ENCODE measurements at regions of chr10 and their contacts with region 1.

Region 1: DNA sequence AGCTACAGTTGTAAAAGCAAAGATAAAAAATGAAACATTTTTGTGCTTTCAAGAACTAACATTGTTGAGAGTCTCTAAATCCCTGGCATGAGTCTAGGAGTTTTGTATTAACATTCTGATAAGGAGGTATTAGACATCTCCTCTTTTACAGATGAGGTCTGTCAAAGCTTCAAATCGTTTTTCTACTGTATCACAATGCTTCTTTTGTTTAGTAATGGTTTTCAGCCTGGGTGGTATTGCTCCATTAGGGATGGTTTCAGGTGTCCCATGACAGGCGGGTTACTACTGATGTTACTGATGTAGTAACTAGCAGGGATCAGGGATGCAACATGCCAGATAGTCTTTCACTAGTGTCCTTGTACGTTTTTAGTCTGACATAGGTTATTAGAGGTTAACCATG is 27.4 kb downstream of the STAM start:
- DNase-seq: no peak
- ATAC-seq: no peak
- H3K4me3 ChIP-seq: no peak overlapping the region
- H3K27ac ChIP-seq: no peak overlapping the region
- H3K4me1 ChIP-seq: peaks cover 12% of the 10 kb centered on the region
- H3K27me3 ChIP-seq: no peaks in the 10 kb centered on the region
- CTCF ChIP-seq: no peak
- EP300 ChIP-seq: no peak
- POLR2A ChIP-seq: no peak
- RAD21 ChIP-seq: no peak

Region 2: DNA sequence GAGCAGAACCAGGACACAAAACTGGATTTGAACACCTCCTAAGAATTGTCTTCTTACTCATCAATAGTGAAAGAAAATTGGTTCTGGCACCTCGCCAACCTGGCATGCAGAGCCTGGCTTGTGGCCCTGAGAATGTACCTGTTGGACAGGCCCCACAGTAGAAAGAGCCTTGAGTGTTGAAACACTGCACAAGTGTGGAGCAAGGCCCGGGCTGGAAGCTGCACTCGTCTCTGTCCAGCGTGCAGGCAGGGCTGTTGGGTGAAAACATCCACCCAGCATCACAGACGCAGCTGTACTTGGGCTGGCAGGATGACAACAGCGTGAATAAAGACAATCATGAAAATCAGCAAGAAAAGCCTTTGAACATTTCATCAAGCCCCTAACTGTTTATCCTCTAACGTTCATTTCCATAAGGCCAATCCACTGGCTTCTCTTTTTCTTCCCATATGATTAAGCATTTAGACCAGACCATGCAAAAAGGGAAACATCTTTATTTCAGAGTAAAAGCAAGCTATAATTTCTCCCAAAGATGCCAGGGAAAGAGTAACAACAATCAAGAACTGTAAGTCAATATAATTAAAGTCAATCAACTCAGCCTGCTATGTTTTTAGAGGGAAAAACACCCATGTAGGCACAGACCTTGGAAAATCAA is 557.3 kb before region 1 on chr10:
- CTCF ChIA-PET with region 1: no interaction called
- POLR2A ChIA-PET with region 1: no interaction called
- RAD21 ChIA-PET with region 1: no interaction called
- SMC1A ChIA-PET with region 1: no interaction called
- in situ Hi-C with region 1: no loop called
- intact Hi-C with region 1: no loop called
- DNase-seq: no peak
- ATAC-seq: no peak
- H3K4me3 ChIP-seq: no peak overlapping the region
- H3K27ac ChIP-seq: no peak overlapping the region
- H3K4me1 ChIP-seq: no peaks in the 10 kb centered on the region
- H3K27me3 ChIP-seq: no peaks in the 10 kb centered on the region; a peak in 1 of 4 replicates
- CTCF ChIP-seq: no peak
- EP300 ChIP-seq: no peak
- POLR2A ChIP-seq: no peak
- RAD21 ChIP-seq: no peak

Region 3: DNA sequence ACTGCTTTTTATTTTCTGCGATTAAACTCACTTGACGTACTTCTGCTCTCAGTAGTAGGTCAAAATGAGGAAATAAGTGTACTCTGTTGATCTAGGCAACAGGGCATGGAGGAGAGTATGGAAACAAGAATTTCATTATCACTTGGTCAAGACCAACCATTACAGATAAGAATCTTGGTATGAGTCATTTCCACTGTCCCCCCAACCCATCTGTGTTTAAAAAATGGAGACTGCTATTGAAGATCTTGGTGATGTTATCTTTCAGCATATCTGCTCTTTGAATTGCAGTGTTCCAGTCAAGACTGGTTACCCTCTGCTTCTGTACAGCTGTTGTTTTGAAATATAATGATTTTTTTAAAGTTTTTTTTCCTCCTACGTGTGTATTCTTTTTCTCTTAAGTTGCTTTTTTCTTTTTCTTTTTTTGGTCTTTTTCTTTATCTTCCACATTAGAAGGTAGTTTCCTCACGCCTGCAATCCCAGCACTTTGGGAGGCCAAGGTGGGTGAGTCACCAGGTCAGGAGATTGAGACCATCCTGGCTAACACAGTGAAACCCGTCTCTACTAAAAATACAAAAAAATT is 15.7 kb before region 1 on chr10:
- CTCF ChIA-PET with region 1: interaction called, 4 read pairs
- POLR2A ChIA-PET with region 1: interaction called, 4 read pairs
- RAD21 ChIA-PET with region 1: no interaction called
- SMC1A ChIA-PET with region 1: interaction called, 13 read pairs
- in situ Hi-C with region 1: no loop called
- intact Hi-C with region 1: no loop called
- DNase-seq: peak; percentile 64
- ATAC-seq: peak; percentile 92
- H3K4me3 ChIP-seq: no peak overlapping the region; the same call in 1 of the 2 replicates
- H3K27ac ChIP-seq: peak overlapping the region; percentile 49
- H3K4me1 ChIP-seq: peaks cover 11% of the 10 kb centered on the region; the same call in 1 of the 2 replicates
- H3K27me3 ChIP-seq: no peaks in the 10 kb centered on the region
- CTCF ChIP-seq: no peak
- EP300 ChIP-seq: peak; percentile 59 to 76; a peak in 2 of 4 replicates
- POLR2A ChIP-seq: no peak
- RAD21 ChIP-seq: no peak

Region 4: DNA sequence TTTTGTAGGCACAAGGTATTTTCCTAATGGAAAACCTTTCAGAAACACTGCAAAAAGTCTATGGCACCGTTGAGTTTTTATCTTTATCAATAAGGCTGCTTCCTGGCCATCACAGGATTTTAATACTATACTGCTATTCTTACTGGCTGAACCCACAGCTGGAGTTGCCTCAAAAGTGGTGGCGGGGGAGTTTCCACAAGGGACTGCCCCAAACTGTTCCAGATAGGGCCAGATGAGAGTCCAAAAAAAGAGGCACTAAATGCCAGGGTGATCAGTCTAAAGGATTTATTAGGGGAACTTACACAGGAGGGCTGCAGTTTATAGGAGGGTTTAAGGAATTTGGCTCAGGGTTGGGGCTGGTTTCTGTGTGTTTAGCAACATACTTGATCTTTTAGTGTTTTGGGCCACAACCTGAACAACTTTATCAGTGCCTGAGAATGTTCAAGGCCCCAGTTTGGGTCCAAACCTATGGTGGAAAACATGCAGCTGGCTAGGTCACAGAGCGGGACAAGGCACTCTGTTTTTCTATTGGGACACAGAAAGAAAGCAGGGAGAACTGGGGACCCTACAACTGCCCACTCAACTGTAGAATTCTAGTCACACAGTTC is 14.0 kb after region 1 on chr10:
- CTCF ChIA-PET with region 1: no interaction called
- POLR2A ChIA-PET with region 1: interaction called, 5 read pairs
- RAD21 ChIA-PET with region 1: interaction called, 5 read pairs
- SMC1A ChIA-PET with region 1: interaction called, 12 read pairs
- in situ Hi-C with region 1: no loop called
- intact Hi-C with region 1: no loop called
- DNase-seq: peak; percentile 28
- ATAC-seq: peak; percentile 89
- H3K4me3 ChIP-seq: no peak overlapping the region
- H3K27ac ChIP-seq: peak overlapping the region; percentile 83
- H3K4me1 ChIP-seq: peaks cover 12% of the 10 kb centered on the region
- H3K27me3 ChIP-seq: no peaks in the 10 kb centered on the region
- CTCF ChIP-seq: no peak
- EP300 ChIP-seq: peak in 1 of 2 experiments; percentile 50; a peak in 1 of 4 replicates
- POLR2A ChIP-seq: no peak
- RAD21 ChIP-seq: no peak